ENCODE measurements at regions of chr17 and their contacts with region 1.

Region 1: DNA sequence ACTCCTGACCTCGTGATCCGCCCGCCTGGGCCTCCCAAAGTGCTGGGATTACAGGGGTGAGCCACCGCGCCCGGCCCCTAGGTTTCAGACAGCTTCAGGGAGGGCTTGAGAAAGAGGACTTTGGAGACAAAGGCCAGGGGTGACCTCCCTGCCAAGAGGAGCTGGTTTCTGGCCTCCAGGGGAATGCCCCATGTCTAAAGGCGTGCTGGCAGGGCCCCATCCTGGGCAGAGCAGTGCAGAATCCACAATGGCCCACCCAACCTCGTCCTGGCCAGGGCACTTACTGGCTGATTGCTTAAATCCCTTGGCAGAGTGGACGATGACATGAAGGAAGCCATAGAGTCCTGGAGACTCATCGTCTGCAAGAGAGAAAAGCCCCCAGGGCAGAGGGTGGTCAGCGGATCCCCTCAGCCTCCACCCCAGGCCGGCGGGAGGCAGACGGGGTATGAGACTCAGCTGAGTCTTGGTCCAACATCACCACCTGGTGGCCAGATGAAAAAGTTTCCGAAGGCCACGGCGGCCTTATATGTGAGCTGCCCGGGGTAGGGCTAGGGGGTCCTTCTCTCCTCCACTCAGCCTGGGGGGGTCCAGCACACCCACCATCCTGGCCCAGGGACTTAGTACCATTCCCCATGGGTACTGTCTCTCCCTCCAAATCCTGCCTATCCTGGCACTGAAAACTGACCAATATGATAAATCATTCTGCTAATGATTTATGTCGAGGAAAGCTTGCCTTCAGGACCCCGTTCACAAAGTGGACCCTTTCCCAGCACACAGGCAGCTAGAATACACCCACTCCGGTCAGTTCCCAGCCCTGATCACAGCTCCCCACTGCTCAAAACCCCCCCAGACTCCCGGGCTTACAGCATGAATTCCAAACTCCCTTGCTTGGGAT is 59.1 kb downstream of the TIMM22 start:
- DNase-seq: peak in 1 of 2 donors; percentile 72
- H3K4me3 ChIP-seq: no peak overlapping the region
- H3K27ac ChIP-seq: peak overlapping the region; percentile 46 to 70
- H3K4me1 ChIP-seq: peaks cover 0 to 9% (median 2%) of the 10 kb centered on the region in 4 donors
- H3K27me3 ChIP-seq: no peaks in the 10 kb centered on the region
- CTCF ChIP-seq: peak; percentile 81 to 87

Region 2: DNA sequence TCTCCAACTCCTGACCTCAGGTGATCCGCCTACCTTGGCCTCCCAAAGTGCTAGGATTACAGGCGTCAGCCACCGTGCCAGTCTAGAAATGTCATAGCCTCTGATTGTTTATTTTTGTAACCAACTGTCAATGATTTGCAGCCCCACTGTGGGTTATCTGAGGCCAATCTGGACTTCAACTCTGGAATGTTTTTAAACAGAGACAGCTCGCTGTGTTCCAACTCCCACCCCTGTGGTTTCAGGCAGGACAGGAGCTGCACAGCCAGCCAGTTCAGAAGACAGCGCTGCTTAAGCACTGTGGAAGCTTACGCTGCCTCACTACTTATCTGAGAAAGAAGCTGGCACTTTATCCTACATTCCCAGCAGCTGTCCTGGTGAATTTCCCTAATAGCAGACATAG is 254.3 kb before region 1 on chr17:
- intact Hi-C with region 1: loop called (anchors 5 kb)
- DNase-seq: no peak
- H3K4me3 ChIP-seq: no peak overlapping the region
- H3K27ac ChIP-seq: peak overlapping the region in 1 of 2 donors; percentile 27
- H3K4me1 ChIP-seq: peaks cover 0 to 17% (median 4%) of the 10 kb centered on the region in 4 donors
- H3K27me3 ChIP-seq: no peaks in the 10 kb centered on the region
- CTCF ChIP-seq: no peak

Region 3: DNA sequence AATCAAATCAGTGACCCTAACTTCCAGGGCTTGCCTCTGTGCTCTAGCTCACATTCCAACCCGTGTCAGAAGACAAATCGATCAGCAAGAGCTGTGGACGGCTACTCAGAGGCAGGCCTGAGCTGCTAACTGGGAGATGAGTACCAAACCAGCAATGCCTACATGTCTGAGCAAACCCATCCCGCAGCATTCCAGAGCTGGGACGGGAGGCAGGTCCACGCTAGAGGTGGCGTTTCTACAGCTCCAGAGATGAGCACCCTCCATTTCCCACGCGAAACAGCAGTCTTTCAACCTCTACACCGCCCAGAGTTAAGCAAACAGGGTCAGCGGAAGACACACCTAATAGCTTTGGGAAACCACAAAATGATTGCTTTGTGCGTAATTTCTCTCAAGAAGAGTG is 82.9 kb before region 1 on chr17:
- intact Hi-C with region 1: no loop called
- DNase-seq: no peak
- H3K4me3 ChIP-seq: no peak overlapping the region
- H3K27ac ChIP-seq: no peak overlapping the region
- H3K4me1 ChIP-seq: peaks cover 0 to 23% (median 10%) of the 10 kb centered on the region in 4 donors
- H3K27me3 ChIP-seq: no peaks in the 10 kb centered on the region
- CTCF ChIP-seq: no peak

Region 4: GRCh38 chr17:996554-997344 is 59.2 kb before region 1 on chr17 and contains the start of gene TIMM22:
- intact Hi-C with region 1: loop called (anchors 2 kb)
- DNase-seq: peak; percentile 89 to 94
- H3K4me3 ChIP-seq: peak within 1 kb of the TSS; percentile 68 to 69
- H3K27ac ChIP-seq: peak within 1 kb of the TSS; percentile 71 to 82
- H3K4me1 ChIP-seq: peaks cover 3 to 34% (median 32%) of the 10 kb centered on the region in 4 donors
- H3K27me3 ChIP-seq: no peaks in the 10 kb centered on the region
- CTCF ChIP-seq: peak; percentile 86 to 89